ENCODE measurements at regions of chr2 and their contacts with region 1.

Region 1: GRCh38 chr2:207166039-207166348 is 246 bp upstream of the KLF7 start:
- DNase-seq: peak; percentile 88 to 97 (median 95)
- ATAC-seq: peak; percentile 90
- H3K4me3 ChIP-seq: peak overlapping the region; percentile 72 to 90
- H3K4me3 Mint-ChIP-seq: peak overlapping the region; percentile 96
- H3K27ac ChIP-seq: peak overlapping the region; percentile 93 to 98
- H3K27ac Mint-ChIP-seq: peak overlapping the region; percentile 97
- H3K4me1 ChIP-seq: peaks cover 15% of the 10 kb centered on the region
- H3K4me1 Mint-ChIP-seq: peaks cover 46% of the 10 kb centered on the region
- H3K27me3 ChIP-seq: peaks cover 0 to 4% of the 10 kb centered on the region in 2 experiments
- H3K27me3 Mint-ChIP-seq: no peaks in the 10 kb centered on the region
- CTCF ChIP-seq: no peak

Region 2: DNA sequence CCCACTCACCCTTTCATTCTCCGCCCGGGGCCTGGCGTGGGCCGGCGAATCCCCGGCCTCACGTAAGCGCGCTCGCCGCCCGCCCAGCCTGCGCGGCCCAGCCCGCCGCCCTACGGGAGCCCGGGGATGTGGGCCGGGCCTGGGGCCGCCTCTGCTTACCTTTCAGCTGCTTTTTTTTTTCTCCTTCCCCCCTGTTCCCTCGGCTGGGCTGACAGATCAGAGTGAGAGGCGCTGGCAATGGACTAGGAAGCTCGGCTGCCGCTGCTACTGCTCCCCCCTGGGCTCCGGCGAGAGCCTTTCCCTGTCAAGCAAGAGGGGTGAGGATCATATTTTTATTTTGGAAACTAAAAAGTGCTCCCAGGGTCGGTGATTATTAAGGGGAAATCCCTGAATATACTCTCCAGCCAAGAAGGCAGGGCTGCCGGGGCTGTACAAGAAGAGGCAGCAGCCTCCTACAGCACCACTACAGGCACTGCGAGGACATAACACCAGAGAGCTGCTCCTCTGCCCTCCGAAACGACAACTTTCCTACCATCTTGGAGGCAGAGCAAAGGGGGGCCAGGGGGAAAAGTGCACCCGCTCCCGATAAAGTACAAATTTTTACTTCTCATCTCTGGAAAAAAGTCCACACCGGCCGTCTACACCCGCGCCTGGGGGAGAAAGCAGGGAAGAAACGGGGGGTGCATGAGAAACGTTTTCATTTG is 1080.1 kb before region 1 on chr2 and contains the start of gene INO80D:
- CTCF ChIA-PET with region 1: no interaction called
- POLR2A ChIA-PET with region 1: no interaction called
- intact Hi-C with region 1: loop called in 1 of 2 experiments (anchors 5 kb)
- DNase-seq: peak; percentile 63 to 93 (median 76)
- ATAC-seq: peak; percentile 91
- H3K4me3 ChIP-seq: peak within 1 kb of the TSS; percentile 85 to 88
- H3K4me3 Mint-ChIP-seq: peak within 1 kb of the TSS; percentile 100
- H3K27ac ChIP-seq: peak within 1 kb of the TSS; percentile 92 to 98
- H3K27ac Mint-ChIP-seq: peak within 1 kb of the TSS; percentile 100
- H3K4me1 ChIP-seq: peaks cover 32% of the 10 kb centered on the region
- H3K4me1 Mint-ChIP-seq: peaks cover 50% of the 10 kb centered on the region
- H3K27me3 ChIP-seq: no peaks in the 10 kb centered on the region
- H3K27me3 Mint-ChIP-seq: no peaks in the 10 kb centered on the region
- CTCF ChIP-seq: peak; percentile 66
- total RNA-seq, gene INO80D: 48.5 to 48.6 TPM

Region 3: GRCh38 chr2:206765242-206766056 is 400.5 kb before region 1 on chr2 and contains the starts of genes FASTKD2 and MDH1B:
- CTCF ChIA-PET with region 1: no interaction called
- POLR2A ChIA-PET with region 1: interaction called, 3 read pairs
- intact Hi-C with region 1: loop called in 1 of 2 experiments (anchors 1 kb)
- DNase-seq: peak; percentile 64 to 94 (median 81)
- ATAC-seq: peak; percentile 87
- H3K4me3 ChIP-seq: peak within 1 kb of the TSS; percentile 62 to 94
- H3K4me3 Mint-ChIP-seq: peak within 1 kb of the TSS; percentile 94
- H3K27ac ChIP-seq: peak within 1 kb of the TSS; percentile 93 to 97
- H3K27ac Mint-ChIP-seq: peak within 1 kb of the TSS; percentile 98
- H3K4me1 ChIP-seq: peaks cover 40% of the 10 kb centered on the region
- H3K4me1 Mint-ChIP-seq: peaks cover 41% of the 10 kb centered on the region
- H3K27me3 ChIP-seq: no peaks in the 10 kb centered on the region
- H3K27me3 Mint-ChIP-seq: no peaks in the 10 kb centered on the region
- CTCF ChIP-seq: no peak
- total RNA-seq, gene FASTKD2: 31.3 to 33.8 TPM
- total RNA-seq, gene MDH1B: 0.19 to 0.33 TPM

Region 4: DNA sequence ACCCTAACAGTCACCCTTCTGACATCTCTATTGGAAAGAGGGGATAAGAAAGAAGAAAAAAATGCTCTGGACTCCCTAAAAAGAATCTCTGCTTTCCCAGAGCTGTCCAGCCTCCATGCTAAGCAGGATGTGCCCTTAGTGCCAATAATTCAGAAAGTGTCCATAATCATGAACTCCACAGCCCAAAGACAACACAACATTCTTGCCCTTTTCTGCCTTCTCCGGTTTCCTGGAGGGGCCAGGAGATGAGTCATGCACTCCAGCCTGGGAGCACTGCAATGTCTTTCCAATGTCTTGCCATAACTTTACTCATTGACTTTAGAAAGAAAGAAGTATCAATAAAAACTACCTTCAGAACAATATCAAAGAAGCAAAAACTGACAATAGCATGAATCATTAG is 44.2 kb before region 1 on chr2:
- CTCF ChIA-PET with region 1: no interaction called
- POLR2A ChIA-PET with region 1: interaction called, 4 read pairs
- intact Hi-C with region 1: loop called in 1 of 2 experiments (anchors 5 kb)
- DNase-seq: no peak
- ATAC-seq: no peak
- H3K4me3 ChIP-seq: no peak overlapping the region
- H3K4me3 Mint-ChIP-seq: no peak overlapping the region
- H3K27ac ChIP-seq: no peak overlapping the region
- H3K27ac Mint-ChIP-seq: no peak overlapping the region
- H3K4me1 ChIP-seq: peaks cover 4% of the 10 kb centered on the region
- H3K4me1 Mint-ChIP-seq: peaks cover 46% of the 10 kb centered on the region
- H3K27me3 ChIP-seq: no peaks in the 10 kb centered on the region
- H3K27me3 Mint-ChIP-seq: no peaks in the 10 kb centered on the region
- CTCF ChIP-seq: no peak

Region 5: GRCh38 chr2:207143215-207144172 is 22.5 kb before region 1 on chr2:
- CTCF ChIA-PET with region 1: interaction called, 45 read pairs
- POLR2A ChIA-PET with region 1: interaction called, 154 read pairs
- intact Hi-C with region 1: loop called (anchors 1 kb)
- DNase-seq: peak; percentile 28 to 80 (median 55)
- ATAC-seq: peak; percentile 66
- H3K4me3 ChIP-seq: peak overlapping the region; percentile 6 to 36
- H3K4me3 Mint-ChIP-seq: peak overlapping the region; percentile 71
- H3K27ac ChIP-seq: peak overlapping the region; percentile 66 to 83
- H3K27ac Mint-ChIP-seq: peak overlapping the region; percentile 91
- H3K4me1 ChIP-seq: peaks cover 40% of the 10 kb centered on the region
- H3K4me1 Mint-ChIP-seq: peaks cover 63% of the 10 kb centered on the region
- H3K27me3 ChIP-seq: no peaks in the 10 kb centered on the region
- H3K27me3 Mint-ChIP-seq: no peaks in the 10 kb centered on the region
- CTCF ChIP-seq: no peak

Region 6: GRCh38 chr2:207219676-207220501 is 53.9 kb after region 1 on chr2:
- CTCF ChIA-PET with region 1: no interaction called
- POLR2A ChIA-PET with region 1: no interaction called
- intact Hi-C with region 1: no loop called
- DNase-seq: no peak
- ATAC-seq: no peak
- H3K4me3 ChIP-seq: no peak overlapping the region
- H3K4me3 Mint-ChIP-seq: no peak overlapping the region
- H3K27ac ChIP-seq: no peak overlapping the region
- H3K27ac Mint-ChIP-seq: no peak overlapping the region
- H3K4me1 ChIP-seq: peaks cover 6% of the 10 kb centered on the region
- H3K4me1 Mint-ChIP-seq: peaks cover 6% of the 10 kb centered on the region
- H3K27me3 ChIP-seq: no peaks in the 10 kb centered on the region
- H3K27me3 Mint-ChIP-seq: no peaks in the 10 kb centered on the region
- CTCF ChIP-seq: no peak

Region 7: DNA sequence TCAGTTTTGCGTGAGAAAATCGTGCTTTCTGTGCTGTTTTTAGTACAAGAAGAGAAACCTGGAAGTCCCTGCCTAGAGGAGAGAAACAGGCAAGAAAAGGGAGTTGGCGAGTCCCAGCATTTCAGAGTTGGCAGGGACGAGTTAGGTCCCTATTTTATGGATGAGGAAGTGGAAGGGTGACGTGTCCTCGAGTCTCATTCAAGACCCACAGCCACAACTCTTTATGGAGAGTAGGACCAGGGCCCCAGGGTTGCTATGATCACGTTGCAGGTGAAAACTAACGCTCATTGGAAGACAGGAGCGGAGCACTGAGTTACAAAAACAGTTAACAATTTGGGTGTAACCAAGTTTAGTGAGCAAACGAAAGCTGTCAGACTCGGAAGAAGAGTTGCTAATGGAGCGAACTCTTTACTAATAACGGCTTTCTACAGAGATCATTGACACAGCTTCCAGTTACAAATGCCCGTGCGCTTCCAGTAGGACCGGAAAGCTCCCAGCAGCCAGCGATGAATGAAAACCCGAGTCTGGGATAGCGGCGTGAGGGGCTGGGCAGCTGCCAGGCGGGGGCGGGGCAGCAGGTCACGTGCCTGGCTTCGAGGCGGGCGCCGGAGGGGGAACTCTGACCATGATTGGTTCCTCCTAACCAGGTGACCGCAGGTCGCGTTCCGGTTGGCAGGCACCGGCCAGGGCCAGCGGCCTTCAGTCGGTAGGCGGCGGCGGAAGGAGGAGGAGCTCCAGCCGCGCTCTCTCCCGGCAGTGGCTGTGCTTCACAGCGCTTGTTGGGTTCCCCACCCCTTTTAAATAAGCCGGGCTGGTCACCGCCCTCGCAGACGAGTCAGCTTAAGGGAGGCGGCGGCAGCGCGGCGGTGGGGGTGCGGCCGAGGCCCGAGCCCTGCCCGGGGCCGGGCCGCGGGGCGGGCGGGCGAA is 545.1 kb after region 1 on chr2 and contains the start of gene CCNYL1:
- CTCF ChIA-PET with region 1: no interaction called
- POLR2A ChIA-PET with region 1: no interaction called
- intact Hi-C with region 1: loop called (anchors 1 to 10 kb)
- DNase-seq: peak; percentile 95 to 99 (median 97)
- ATAC-seq: peak; percentile 96
- H3K4me3 ChIP-seq: peak within 1 kb of the TSS; percentile 87 to 97
- H3K4me3 Mint-ChIP-seq: peak within 1 kb of the TSS; percentile 91
- H3K27ac ChIP-seq: peak within 1 kb of the TSS; percentile 69 to 71
- H3K27ac Mint-ChIP-seq: peak within 1 kb of the TSS; percentile 86
- H3K4me1 ChIP-seq: peaks cover 19% of the 10 kb centered on the region
- H3K4me1 Mint-ChIP-seq: peaks cover 22% of the 10 kb centered on the region
- H3K27me3 ChIP-seq: no peaks in the 10 kb centered on the region
- H3K27me3 Mint-ChIP-seq: no peaks in the 10 kb centered on the region
- CTCF ChIP-seq: no peak
- total RNA-seq, gene CCNYL1: 12.0 to 12.3 TPM